Adrenal gland (tissue), 19 donors: ENCODE measurements at regions of chr5 and their contacts with region 1.

Region 1: DNA sequence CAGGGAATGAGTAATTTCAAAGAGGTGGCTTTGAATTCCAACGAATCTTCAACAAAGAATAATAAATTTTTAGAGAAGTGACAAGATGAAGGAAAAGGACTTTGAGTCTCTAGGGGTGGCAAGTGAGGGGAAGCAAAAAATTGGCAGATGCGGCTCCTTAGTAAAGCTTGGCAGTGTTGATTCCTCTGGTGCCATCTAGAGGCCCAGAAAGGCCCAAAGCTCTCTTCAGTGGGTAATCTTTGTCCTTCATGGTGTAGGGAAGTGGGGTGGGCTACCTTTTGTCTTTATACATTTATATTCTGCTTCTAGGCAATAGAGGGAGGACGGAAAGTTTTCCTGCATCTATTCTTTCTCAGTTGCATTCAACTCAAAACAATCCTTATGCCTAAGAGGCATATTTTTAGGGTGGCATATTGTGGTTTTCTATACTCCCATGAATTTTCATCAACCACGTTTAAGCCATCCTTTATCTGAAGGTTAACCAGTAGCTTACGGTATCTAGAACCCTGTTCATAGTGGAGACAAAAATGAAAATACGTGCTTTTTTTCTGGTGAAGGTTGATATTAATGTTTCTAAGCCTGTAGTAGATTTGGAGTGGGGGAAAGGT is 17.5 kb upstream of the ROPN1L start:
- DNase-seq: peak in 6 of 7 donors; percentile 31 to 64 (median 43)
- H3K4me3 ChIP-seq: no peak overlapping the region
- H3K27ac ChIP-seq: no peak overlapping the region
- H3K4me1 ChIP-seq: peaks cover 0 to 13% of the 10 kb centered on the region in 2 donors
- H3K27me3 ChIP-seq: no peaks in the 10 kb centered on the region
- CTCF ChIP-seq: peak; percentile 11 to 56 (median 48)
- POLR2A ChIP-seq: no peak

Region 2: DNA sequence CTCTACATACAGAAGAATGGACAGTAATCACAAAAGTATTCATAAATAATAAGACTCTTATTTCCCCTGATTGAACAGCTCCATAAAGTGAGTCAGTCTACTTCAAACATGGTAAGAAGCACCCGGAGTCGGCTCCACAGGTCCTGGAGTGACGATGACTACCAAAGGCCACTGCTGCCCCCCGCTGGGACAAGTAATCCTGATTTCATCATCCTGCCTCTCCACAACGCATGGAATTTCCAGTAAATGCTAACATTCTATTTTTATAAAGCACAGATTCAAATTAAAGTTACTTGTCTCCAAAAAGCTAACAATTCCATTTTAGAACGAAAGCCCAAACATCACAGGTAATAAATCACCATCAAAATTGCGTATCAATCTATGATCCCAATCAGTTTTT is 190.7 kb before region 1 on chr5:
- intact Hi-C with region 1: no loop called
- DNase-seq: peak in 4 of 7 donors; percentile 30 to 36 (median 32)
- H3K4me3 ChIP-seq: no peak overlapping the region
- H3K27ac ChIP-seq: no peak overlapping the region
- H3K4me1 ChIP-seq: no peaks in the 10 kb centered on the region
- H3K27me3 ChIP-seq: no peaks in the 10 kb centered on the region
- CTCF ChIP-seq: no peak
- POLR2A ChIP-seq: no peak

Region 3: GRCh38 chr5:10283927-10284635 is 140.1 kb before region 1 on chr5:
- intact Hi-C with region 1: loop called (anchors 5 to 10 kb)
- DNase-seq: peak; percentile 76 to 94 (median 84)
- H3K4me3 ChIP-seq: no peak overlapping the region
- H3K27ac ChIP-seq: no peak overlapping the region
- H3K4me1 ChIP-seq: peaks cover 6% of the 10 kb centered on the region in 2 donors
- H3K27me3 ChIP-seq: no peaks in the 10 kb centered on the region
- CTCF ChIP-seq: peak; percentile 86 to 95 (median 89)
- POLR2A ChIP-seq: no peak

Region 4: GRCh38 chr5:10353241-10354047 is 70.8 kb before region 1 on chr5 and contains the start of gene MARCHF6:
- intact Hi-C with region 1: loop called in 1 of 2 experiments (anchors 10 kb)
- DNase-seq: peak; percentile 93 to 97 (median 96)
- H3K4me3 ChIP-seq: peak within 1 kb of the TSS; percentile 88 to 100 (median 92)
- H3K27ac ChIP-seq: peak within 1 kb of the TSS; percentile 58 to 98 (median 97)
- H3K4me1 ChIP-seq: peaks cover 7 to 40% of the 10 kb centered on the region in 2 donors
- H3K27me3 ChIP-seq: no peaks in the 10 kb centered on the region
- CTCF ChIP-seq: peak in 1 of 6 experiments; percentile 10
- POLR2A ChIP-seq: peak; percentile 85 to 94
- total RNA-seq, gene MARCHF6: 51.6 to 170 (median 131) TPM